ENCODE measurements at regions of chr1 and their contacts with region 1.

Region 1: DNA sequence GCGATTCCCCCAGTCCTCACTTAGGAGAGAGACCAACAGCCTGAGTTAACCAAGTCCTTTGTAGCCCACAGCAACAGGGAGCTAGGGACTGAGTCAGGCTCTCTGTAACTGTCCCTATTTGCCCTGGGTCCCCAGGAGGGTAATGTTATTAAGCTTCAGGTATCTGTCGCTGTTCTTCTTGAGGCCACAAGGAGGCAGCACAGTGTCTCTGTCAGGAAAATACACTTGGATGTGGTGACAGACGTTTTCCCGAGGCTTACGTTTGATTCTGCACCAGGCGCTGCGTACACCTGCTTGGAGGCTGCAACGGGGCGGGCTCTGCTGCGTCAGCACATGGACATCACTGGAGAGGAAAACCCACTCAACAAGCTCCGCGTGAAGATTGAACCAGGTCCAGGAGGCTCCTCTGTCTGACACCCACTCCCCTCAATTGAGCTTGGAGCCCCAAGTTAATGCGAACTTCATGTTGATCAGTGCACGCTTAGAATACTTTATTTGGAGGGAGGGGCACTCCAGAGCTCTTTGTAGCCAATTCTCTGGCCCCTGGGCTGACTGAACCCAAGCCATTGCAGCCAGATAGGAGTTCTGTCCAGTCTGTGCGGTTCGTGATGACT is 10.7 kb upstream of the ELF3 start:
- DNase-seq: peak; percentile 76
- H3K4me3 ChIP-seq: no peak overlapping the region; a peak in 1 of 4 replicates
- H3K27ac ChIP-seq: no peak overlapping the region
- H3K4me1 ChIP-seq: no peaks in the 10 kb centered on the region
- H3K27me3 ChIP-seq: no peaks in the 10 kb centered on the region
- CTCF ChIP-seq: peak; percentile 72
- EP300 ChIP-seq: no peak
- RAD21 ChIP-seq: peak; percentile 64

Region 2: DNA sequence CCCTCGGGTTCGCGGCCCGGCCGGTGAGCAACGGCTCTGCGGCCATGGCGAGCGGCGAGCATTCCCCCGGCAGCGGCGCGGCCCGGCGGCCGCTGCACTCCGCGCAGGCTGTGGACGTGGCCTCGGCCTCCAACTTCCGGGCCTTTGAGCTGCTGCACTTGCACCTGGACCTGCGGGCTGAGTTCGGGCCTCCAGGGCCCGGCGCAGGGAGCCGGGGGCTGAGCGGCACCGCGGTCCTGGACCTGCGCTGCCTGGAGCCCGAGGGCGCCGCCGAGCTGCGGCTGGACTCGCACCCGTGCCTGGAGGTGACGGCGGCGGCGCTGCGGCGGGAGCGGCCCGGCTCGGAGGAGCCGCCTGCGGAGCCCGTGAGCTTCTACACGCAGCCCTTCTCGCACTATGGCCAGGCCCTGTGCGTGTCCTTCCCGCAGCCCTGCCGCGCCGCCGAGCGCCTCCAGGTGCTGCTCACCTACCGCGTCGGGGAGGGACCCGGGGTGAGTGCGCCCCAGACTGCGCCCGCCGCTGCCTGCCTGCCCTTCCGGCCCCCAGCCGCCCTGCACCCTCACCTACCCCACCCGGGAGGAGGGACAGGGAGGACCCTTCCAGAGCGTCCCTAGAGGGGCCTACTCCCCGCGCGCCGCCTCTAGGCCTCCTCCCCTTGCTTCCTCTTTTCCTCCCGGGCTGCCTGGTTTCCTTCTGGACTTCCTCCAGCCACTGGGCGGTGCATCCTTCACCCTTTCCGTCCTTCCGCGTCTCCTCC is 16.9 kb before region 1 on chr1 and contains the start of gene RNPEP:
- CTCF ChIA-PET with region 1: interaction called, 58 read pairs
- POLR2A ChIA-PET with region 1: no interaction called
- DNase-seq: peak; percentile 82
- H3K4me3 ChIP-seq: peak within 1 kb of the TSS; percentile 67 to 69
- H3K27ac ChIP-seq: peak within 1 kb of the TSS; percentile 66 to 78
- H3K4me1 ChIP-seq: peaks cover 0 to 8% of the 10 kb centered on the region in 2 experiments; a peak in 2 of 4 replicates
- H3K27me3 ChIP-seq: no peaks in the 10 kb centered on the region
- CTCF ChIP-seq: peak; percentile 22; the same call in 1 of the 2 replicates
- EP300 ChIP-seq: no peak
- RAD21 ChIP-seq: no peak
- polyA plus RNA-seq, gene RNPEP: 36.7 and 46.7 TPM in 2 replicates

Region 3: DNA sequence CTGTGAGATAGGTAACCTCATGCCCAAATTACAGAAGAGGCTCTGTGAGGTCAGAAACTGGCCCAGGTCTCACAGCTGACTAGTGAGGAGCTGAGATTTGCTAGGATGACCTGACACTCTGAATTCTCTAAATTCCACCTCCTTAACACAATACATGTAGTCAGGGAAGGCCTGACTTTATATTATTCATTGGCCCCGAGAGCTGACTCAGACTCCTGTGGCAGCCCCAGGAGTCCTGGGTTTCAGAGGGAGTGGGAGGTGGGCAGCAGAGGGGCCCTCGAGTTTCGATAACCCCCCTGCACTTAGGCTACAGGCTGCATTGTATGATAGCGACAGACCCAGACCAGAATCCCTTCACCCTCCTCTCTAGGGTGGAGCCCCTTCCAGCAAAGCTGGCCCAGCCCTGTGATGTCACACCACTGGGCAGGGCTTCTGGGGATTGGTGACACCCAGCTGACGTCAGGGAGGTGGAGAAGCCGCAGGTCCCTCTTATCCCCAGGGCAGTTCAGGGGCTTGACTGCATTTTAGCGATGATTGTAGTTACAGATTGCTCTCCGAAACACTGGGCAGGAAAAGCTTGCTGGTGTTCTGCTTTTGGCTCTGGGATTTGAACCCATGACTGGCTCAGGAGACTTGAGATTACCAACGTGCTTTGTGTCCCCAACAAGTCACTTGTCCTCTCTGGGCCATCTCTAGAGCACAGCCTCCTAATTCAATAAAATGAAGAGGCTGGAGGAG is 106.0 kb after region 1 on chr1:
- CTCF ChIA-PET with region 1: interaction called, 28 read pairs
- POLR2A ChIA-PET with region 1: no interaction called
- DNase-seq: no peak
- H3K4me3 ChIP-seq: no peak overlapping the region
- H3K27ac ChIP-seq: no peak overlapping the region
- H3K4me1 ChIP-seq: peaks cover 0 to 15% of the 10 kb centered on the region in 2 experiments; a peak in 1 of 4 replicates
- H3K27me3 ChIP-seq: no peaks in the 10 kb centered on the region
- CTCF ChIP-seq: no peak
- EP300 ChIP-seq: no peak
- RAD21 ChIP-seq: no peak

Region 4: DNA sequence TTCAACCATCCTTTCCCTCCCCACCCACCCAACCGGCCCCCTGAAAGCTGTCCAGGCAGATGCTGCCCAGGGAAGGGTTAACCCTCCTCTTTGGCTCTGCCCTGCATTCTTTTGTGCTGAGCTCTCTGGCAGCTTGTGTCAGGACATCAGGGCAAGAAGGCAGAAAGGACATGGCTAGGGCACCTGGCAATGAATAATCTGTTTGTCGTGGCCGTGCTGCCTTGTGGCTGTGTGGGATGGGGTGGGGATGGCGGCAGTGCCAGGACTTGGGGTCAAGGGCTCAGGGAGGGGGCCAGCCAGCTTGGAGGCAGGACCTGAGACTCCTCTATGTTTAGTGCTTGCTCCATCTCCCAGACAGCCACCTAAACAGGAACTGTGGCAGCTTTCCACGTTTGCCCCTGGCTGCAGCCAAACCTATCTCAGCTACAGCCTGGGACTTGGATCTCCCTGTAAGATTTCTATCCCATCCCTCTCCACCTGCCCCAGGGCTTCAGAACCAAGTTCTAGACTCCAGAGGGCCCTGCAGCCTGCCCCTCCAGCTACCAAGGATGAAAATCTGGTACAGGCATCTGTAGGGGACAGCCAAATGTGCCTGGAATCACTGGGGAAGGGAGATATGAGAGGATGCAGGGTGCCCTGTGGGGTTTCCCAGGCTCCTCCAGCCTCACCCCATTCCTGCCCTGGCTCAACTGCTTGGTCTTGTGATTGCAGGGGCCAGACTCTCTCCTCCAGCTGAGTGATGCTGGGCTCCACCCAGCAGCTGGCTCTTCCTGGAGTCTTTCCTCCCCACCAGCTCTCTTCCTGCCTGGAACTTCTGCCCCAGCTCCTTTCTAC is 113.3 kb after region 1 on chr1:
- CTCF ChIA-PET with region 1: interaction called, 411 read pairs
- POLR2A ChIA-PET with region 1: no interaction called
- DNase-seq: no peak
- H3K4me3 ChIP-seq: no peak overlapping the region
- H3K27ac ChIP-seq: peak overlapping the region in 1 of 2 experiments; percentile 1; a peak in 1 of 4 replicates
- H3K4me1 ChIP-seq: peaks cover 6 to 12% of the 10 kb centered on the region in 2 experiments; a peak in 2 of 4 replicates
- H3K27me3 ChIP-seq: no peaks in the 10 kb centered on the region
- CTCF ChIP-seq: no peak
- EP300 ChIP-seq: no peak
- RAD21 ChIP-seq: no peak

Region 5: DNA sequence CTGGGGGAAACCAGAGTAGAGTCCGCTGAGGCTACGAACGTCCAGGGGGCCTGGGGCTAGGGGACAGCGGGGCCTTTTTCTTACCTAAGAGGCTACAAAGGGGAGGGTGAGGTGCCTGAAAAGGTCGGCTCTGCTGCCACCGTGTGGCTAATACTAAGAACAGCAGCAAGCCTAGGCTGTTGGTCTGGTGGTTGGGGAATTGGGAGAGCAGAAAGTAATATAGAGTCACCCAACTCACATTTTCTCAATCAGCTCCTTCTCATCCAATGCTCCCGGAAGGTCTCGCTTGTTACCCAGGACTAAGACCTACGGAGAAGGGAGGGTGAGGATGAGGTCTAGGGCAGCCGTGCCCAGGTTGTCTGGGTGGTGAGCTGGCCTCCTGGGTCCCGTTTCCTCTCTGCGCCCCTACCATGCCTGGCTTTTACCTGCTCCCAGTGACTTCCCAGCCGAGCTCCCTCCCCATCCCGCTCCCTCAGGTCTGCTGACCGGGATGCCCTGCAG is 135.5 kb after region 1 on chr1:
- CTCF ChIA-PET with region 1: interaction called, 44 read pairs
- POLR2A ChIA-PET with region 1: no interaction called
- DNase-seq: peak; percentile 93
- H3K4me3 ChIP-seq: no peak overlapping the region; a peak in 1 of 4 replicates
- H3K27ac ChIP-seq: no peak overlapping the region
- H3K4me1 ChIP-seq: peaks cover 0 to 4% of the 10 kb centered on the region in 2 experiments; a peak in 1 of 4 replicates
- H3K27me3 ChIP-seq: no peaks in the 10 kb centered on the region
- CTCF ChIP-seq: peak; percentile 81
- EP300 ChIP-seq: no peak
- RAD21 ChIP-seq: peak; percentile 76

Region 6: GRCh38 chr1:202144402-202145067 is 144.8 kb after region 1 on chr1 and contains the start of gene ARL8A:
- CTCF ChIA-PET with region 1: interaction called, 13 read pairs
- POLR2A ChIA-PET with region 1: no interaction called
- DNase-seq: peak; percentile 93
- H3K4me3 ChIP-seq: peak within 1 kb of the TSS; percentile 87 to 93
- H3K27ac ChIP-seq: peak within 1 kb of the TSS; percentile 30 to 74; a peak in 2 of 4 replicates
- H3K4me1 ChIP-seq: peaks cover 8 to 16% of the 10 kb centered on the region in 2 experiments; a peak in 2 of 4 replicates
- H3K27me3 ChIP-seq: no peaks in the 10 kb centered on the region
- CTCF ChIP-seq: no peak
- EP300 ChIP-seq: no peak
- RAD21 ChIP-seq: no peak
- polyA plus RNA-seq, gene ARL8A: 62.0 and 66.9 TPM in 2 replicates